Activated CD4-positive, alpha-beta memory T cell treated with anti-CD3 and anti-CD28 coated beads for 36 hours (primary cell): ENCODE measurements at regions of chr17 and their contacts with region 1.

Region 1: DNA sequence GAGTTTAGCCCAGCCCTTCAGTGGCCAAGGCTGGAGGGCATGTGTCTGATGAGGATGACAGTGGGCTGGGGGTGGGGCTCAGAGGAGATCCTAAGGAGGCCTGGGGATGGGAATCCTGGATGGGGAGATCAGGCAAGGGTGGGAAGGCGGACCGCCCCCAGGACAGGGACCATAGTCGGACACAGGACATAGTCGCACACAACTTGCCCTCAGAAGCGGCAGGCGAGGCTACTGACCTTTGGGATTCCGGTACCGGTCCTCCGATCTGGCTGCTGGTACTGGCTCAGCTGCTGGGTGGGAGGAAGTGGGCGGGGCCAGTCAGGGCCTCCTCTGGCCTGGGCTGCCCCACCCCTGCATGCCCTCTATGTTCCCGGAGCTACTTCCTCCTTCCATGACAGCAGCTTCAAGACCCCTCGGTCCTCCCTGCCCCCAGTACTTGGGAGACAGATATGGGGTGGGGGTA is 1.0 kb downstream of the CD79B start:
- DNase-seq: peak; percentile 77
- H3K4me3 Mint-ChIP-seq: peak overlapping the region; percentile 95
- H3K27ac Mint-ChIP-seq: peak overlapping the region; percentile 91
- H3K4me1 Mint-ChIP-seq: peaks cover 17% of the 10 kb centered on the region
- H3K27me3 Mint-ChIP-seq: no peaks in the 10 kb centered on the region

Region 2: DNA sequence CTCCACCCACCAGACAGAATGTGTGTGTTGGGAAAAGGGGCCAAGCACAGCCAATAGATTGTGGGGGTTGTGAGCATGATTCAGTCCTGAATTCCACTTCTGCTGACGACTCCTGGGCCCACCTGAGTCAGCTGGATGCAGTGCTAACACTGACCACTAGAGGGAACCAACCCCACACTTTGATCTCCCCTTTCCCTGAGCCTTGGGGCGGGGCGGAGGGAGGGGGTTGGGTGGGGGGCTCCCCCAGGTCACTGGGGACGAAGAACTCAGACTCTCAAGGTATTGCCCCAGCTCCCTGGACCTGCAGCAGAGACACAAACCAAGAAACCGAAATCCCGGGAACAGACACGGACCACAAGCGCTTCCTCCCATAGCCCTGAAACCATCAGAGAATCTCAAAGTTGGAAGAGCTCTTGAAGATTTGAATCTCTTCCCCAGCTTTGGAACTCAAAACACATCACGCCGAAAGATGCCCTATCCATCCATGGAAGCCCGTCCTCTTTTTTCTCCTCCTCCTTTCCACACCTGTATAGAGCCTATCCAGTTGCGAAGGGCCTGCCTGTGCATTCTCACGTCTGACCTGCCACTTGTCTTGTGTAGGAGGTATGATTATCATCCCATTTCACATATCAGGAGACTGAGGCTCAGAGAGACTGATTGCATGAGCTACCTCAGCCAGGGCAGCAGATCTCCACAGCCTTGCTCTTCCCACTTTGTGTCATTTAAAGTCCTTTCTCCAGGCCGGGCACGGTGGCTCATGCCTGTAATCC is 19.3 kb before region 1 on chr17:
- CTCF ChIA-PET with region 1: interaction called, 10 read pairs
- POLR2A ChIA-PET with region 1: no interaction called
- intact Hi-C with region 1: no loop called
- DNase-seq: peak; percentile 77
- H3K4me3 Mint-ChIP-seq: no peak overlapping the region
- H3K27ac Mint-ChIP-seq: no peak overlapping the region
- H3K4me1 Mint-ChIP-seq: no peaks in the 10 kb centered on the region
- H3K27me3 Mint-ChIP-seq: no peaks in the 10 kb centered on the region

Region 3: GRCh38 chr17:63919311-63919723 is 11.8 kb before region 1 on chr17:
- CTCF ChIA-PET with region 1: interaction called, 17 read pairs
- POLR2A ChIA-PET with region 1: no interaction called
- intact Hi-C with region 1: no loop called
- DNase-seq: peak; percentile 84
- H3K4me3 Mint-ChIP-seq: peak overlapping the region; percentile 27
- H3K27ac Mint-ChIP-seq: peak overlapping the region; percentile 44
- H3K4me1 Mint-ChIP-seq: peaks cover 6% of the 10 kb centered on the region
- H3K27me3 Mint-ChIP-seq: no peaks in the 10 kb centered on the region